Heart right ventricle (tissue), 16 donors: ENCODE measurements at regions of chr15 and their contacts with region 1.

Region 1: DNA sequence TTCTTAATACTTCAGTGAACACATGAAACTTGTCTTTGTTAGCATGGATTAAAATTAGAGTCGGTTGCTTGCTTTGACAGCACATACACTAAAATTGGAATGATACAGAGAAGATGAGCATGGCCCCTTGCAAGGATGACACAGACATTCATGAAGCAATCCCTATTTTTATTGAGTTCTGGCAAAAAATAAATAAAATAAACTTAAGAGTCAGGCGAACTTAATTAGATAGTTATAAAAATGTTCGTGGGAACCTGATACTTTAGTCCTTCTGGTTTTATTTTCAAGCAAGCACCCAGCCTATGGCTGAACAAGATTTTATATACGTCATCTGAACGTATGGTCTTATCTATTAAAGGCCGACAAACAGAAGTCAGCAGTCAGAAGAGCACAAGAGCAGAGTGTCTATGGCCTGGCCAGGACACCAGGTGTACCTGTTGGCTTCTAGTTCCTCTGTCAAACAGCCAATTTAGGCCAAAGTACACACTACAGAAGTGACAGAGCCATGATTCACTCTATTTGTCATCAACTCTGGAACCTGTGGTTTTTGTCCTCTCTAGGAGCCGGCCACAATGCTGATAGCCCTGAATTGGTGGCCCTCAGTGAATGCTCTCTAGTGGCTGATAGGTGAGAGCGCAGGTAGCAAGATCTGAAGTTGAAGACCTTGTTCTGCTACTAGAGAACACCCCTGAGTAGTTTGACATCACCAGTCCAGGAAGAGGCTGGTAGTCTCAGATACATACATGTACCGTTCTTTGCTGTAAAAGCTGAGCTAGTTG is 64.3 kb downstream of the LEO1 start:
- DNase-seq: no peak
- ATAC-seq: peak in 1 of 8 donors; percentile 46
- H3K4me3 ChIP-seq: no peak overlapping the region
- H3K27ac ChIP-seq: no peak overlapping the region
- H3K4me1 ChIP-seq: peaks cover 0 to 8% (median 0%) of the 10 kb centered on the region in 9 donors
- H3K27me3 ChIP-seq: no peaks in the 10 kb centered on the region
- CTCF ChIP-seq: no peak

Region 2: GRCh38 chr15:51737280-51738017 is 169.9 kb before region 1 on chr15 and contains the start of gene LYSMD2:
- intact Hi-C with region 1: no loop called
- DNase-seq: peak; percentile 86 to 87
- ATAC-seq: peak; percentile 92 to 98 (median 94)
- H3K4me3 ChIP-seq: peak within 1 kb of the TSS; percentile 66 to 93 (median 78)
- H3K27ac ChIP-seq: peak within 1 kb of the TSS; percentile 71 to 92 (median 88)
- H3K4me1 ChIP-seq: peaks cover 4 to 44% (median 33%) of the 10 kb centered on the region in 9 donors
- H3K27me3 ChIP-seq: no peaks in the 10 kb centered on the region
- CTCF ChIP-seq: no peak
- total RNA-seq, gene LYSMD2: 1.7 to 8.6 (median 3.9) TPM

Region 3: DNA sequence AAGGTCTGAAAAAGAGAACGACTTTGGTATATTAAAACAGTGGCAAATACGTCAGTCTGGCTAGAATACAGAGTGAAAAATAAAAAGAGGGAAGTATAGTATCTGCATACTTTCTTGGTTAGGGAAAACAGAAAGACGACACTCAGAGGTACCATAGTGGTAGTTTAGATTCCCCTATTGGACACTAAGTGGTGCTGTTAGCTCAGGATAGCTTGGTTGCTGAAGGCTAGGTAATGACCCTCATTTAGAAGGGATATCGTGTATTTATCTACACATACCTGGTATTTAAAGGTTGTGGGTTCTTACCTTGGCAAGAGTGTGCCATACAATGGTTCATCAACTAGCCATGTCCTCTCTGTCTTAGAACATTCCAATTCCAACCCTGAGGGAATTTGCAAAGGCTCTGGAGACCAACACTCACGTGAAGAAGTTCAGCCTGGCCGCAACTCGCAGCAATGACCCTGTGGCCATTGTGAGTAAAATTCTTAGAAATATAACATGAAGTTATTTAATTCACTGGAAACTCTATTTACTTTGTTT is 124.9 kb before region 1 on chr15:
- intact Hi-C with region 1: loop called in 1 of 10 experiments (anchors 10 kb)
- DNase-seq: no peak
- ATAC-seq: no peak
- H3K4me3 ChIP-seq: no peak overlapping the region
- H3K27ac ChIP-seq: no peak overlapping the region
- H3K4me1 ChIP-seq: no peaks in the 10 kb centered on the region
- H3K27me3 ChIP-seq: no peaks in the 10 kb centered on the region
- CTCF ChIP-seq: peak in 6 of 9 donors; percentile 16 to 37 (median 28)

Region 4: GRCh38 chr15:51874751-51875528 is 32.4 kb before region 1 on chr15:
- intact Hi-C with region 1: no loop called
- DNase-seq: peak in 1 of 2 donors; percentile 40
- ATAC-seq: peak in 7 of 8 donors; percentile 34 to 84 (median 76)
- H3K4me3 ChIP-seq: no peak overlapping the region
- H3K27ac ChIP-seq: peak overlapping the region in 7 of 10 donors; percentile 9 to 67 (median 54)
- H3K4me1 ChIP-seq: peaks cover 0 to 48% (median 28%) of the 10 kb centered on the region in 9 donors
- H3K27me3 ChIP-seq: no peaks in the 10 kb centered on the region
- CTCF ChIP-seq: no peak

Region 5: DNA sequence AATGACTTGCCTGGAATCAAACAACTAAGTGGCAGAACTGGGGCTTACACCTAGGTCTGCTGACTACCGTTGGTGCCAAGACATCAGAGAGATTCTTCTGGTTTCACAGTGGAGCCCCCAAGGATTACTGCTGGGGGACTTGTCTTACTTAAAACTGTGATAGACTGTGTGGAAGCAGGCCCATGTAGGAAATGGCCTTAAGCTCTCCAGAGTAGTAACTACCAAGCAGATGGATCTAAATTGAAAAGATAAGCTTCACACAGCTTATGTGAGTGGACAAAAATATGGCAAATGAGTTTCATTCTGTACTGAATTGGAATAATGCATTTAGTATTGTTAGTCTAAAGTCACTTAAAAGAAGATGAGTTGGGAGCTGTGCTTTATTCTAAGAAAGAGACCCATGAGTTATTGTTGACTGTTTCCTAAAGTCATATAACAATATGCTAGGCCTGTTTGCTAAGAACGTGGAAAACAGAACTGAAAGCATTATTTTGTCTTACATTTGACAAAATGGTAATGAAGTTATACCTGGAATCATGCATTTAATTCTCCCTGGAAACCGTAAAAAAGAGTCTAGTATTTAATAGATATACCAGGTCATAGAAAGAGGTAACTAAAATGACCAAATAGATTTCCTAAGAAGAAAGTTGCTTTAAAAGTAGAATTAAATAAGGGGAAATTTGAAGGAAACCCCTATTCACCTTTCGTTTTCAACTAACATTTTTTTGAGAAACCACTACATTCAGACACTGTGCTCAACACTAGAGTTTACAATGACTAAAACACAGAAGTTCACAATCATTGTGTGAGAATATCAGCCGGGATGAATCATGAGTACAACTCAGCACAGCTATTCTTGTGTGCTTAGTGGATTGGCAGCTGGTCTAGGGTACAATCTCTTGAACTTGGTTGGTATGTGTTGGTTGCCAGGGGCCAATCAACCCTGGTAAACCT is 98.7 kb after region 1 on chr15:
- intact Hi-C with region 1: no loop called
- DNase-seq: peak in 1 of 2 donors; percentile 14
- ATAC-seq: peak in 6 of 8 donors; percentile 64 to 91 (median 84)
- H3K4me3 ChIP-seq: no peak overlapping the region
- H3K27ac ChIP-seq: peak overlapping the region in 9 of 10 donors; percentile 15 to 74 (median 59)
- H3K4me1 ChIP-seq: peaks cover 6 to 53% (median 30%) of the 10 kb centered on the region in 9 donors
- H3K27me3 ChIP-seq: no peaks in the 10 kb centered on the region
- CTCF ChIP-seq: no peak